ENCODE measurements at regions of chr11 and their contacts with region 1.

Region 1: DNA sequence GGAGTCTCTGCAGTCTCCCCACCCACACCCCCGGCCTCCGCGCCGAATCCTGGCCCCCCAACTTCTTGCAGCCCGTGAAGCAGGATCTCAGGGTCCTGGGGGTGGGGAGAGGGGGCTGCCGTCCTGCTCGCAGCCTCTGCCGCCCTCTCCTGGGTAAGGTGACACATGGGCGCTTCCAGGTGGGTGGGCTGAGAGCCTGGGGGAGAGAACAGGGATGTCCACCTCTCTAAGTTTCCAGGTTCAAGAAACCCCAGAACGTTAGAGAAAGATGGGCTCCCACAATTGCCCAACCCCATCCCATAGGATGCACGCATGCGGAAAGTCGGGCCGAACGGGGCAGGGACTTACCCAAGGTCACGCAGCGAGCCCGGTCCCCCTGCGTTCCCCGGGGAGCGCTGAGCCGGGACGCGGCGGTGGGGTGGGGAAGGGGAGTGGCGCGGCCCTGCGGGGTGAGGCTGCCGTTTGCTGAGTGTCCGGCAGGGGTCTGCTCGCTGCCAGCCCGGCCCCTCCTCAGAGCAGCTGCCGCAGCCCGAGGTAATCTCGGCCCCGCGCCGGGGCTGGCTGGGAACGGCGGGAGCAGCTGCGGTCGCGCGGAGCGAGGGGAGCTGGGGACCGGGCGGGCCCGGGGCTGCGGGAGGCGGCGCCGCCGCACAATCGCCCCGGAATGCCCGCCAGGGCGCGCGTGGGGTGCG is 705 bp upstream of the CAPN1 start:
- DNase-seq: peak; percentile 79
- ATAC-seq: peak; percentile 74
- H3K4me3 Mint-ChIP-seq: peak overlapping the region; percentile 79
- H3K27ac Mint-ChIP-seq: peak overlapping the region; percentile 80
- H3K4me1 Mint-ChIP-seq: peaks cover 14% of the 10 kb centered on the region
- H3K27me3 Mint-ChIP-seq: no peaks in the 10 kb centered on the region

Region 2: DNA sequence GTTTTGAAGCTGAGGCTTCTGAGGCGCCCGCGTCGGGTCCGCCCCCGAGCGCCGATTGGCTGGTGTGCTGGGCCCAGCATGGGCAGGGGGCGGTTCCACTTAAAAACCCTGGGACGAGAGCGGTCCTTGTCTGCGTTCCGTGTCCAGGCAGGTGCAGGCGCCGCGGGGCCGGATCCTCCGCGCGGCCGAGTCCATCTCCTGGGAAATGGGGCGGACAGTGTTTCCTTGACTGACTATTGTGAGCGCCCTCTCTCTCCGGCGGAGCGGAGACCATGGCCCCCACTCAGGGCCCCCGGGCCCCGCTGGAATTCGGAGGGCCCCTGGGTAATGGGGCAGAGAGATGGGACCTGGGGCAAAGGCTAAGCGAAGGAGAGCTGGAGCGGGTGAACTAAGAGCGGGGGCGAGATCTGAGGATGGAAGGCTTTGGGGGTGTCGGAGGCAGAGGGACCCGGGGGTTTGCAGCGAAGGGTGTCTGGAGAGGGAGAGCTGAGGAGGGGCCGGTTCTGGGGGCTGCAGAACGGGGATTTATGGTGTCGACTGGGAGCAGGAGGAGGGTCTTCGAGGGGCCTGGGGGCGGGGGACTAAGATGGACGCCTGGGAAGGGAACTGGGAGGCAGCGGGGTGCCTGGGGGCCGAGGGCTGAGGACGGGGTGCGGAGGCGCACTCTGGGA is 69.1 kb before region 1 on chr11 and contains the start of gene TM7SF2:
- CTCF ChIA-PET with region 1: interaction called, 4 read pairs
- POLR2A ChIA-PET with region 1: no interaction called
- intact Hi-C with region 1: loop called in 1 of 2 experiments (anchors 1 kb)
- DNase-seq: peak; percentile 98
- ATAC-seq: peak; percentile 78
- H3K4me3 Mint-ChIP-seq: peak within 1 kb of the TSS; percentile 83
- H3K27ac Mint-ChIP-seq: peak within 1 kb of the TSS; percentile 74
- H3K4me1 Mint-ChIP-seq: peaks cover 50% of the 10 kb centered on the region
- H3K27me3 Mint-ChIP-seq: no peaks in the 10 kb centered on the region
- total RNA-seq, gene TM7SF2: 17.4 to 18.1 TPM

Region 3: GRCh38 chr11:65128148-65129145 is 52.6 kb before region 1 on chr11:
- CTCF ChIA-PET with region 1: no interaction called
- POLR2A ChIA-PET with region 1: no interaction called
- intact Hi-C with region 1: no loop called
- DNase-seq: no peak
- ATAC-seq: no peak
- H3K4me3 Mint-ChIP-seq: no peak overlapping the region
- H3K27ac Mint-ChIP-seq: no peak overlapping the region
- H3K4me1 Mint-ChIP-seq: peaks cover 20% of the 10 kb centered on the region
- H3K27me3 Mint-ChIP-seq: no peaks in the 10 kb centered on the region

Measured in activated CD4-positive, alpha-beta T cell treated with anti-CD3 and anti-CD28 coated beads for 36 hours (primary cell).